HepG2 (cell line): ENCODE measurements at regions of chr5 and their contacts with region 1.

Region 1: GRCh38 chr5:75281716-75282465 is 45.2 kb upstream of the ANKRD31 start:
- DNase-seq: peak; percentile 49
- ATAC-seq: peak; percentile 82
- H3K4me3 ChIP-seq: no peak overlapping the region
- H3K27ac ChIP-seq: no peak overlapping the region
- H3K4me1 ChIP-seq: peaks cover 10% of the 10 kb centered on the region; the same call in 1 of the 2 replicates
- H3K27me3 ChIP-seq: no peaks in the 10 kb centered on the region; a peak in 2 of 5 replicates
- CTCF ChIP-seq: no peak
- EP300 ChIP-seq: no peak
- POLR2A ChIP-seq: no peak
- RAD21 ChIP-seq: no peak

Region 2: GRCh38 chr5:75484605-75485004 is 202.7 kb after region 1 on chr5:
- CTCF ChIA-PET with region 1: no interaction called
- POLR2A ChIA-PET with region 1: no interaction called
- in situ Hi-C with region 1: no loop called
- intact Hi-C with region 1: no loop called
- DNase-seq: no peak
- ATAC-seq: no peak
- H3K4me3 ChIP-seq: no peak overlapping the region
- H3K27ac ChIP-seq: no peak overlapping the region
- H3K4me1 ChIP-seq: no peaks in the 10 kb centered on the region
- H3K27me3 ChIP-seq: no peaks in the 10 kb centered on the region
- CTCF ChIP-seq: no peak
- EP300 ChIP-seq: no peak
- POLR2A ChIP-seq: no peak
- RAD21 ChIP-seq: no peak

Region 3: DNA sequence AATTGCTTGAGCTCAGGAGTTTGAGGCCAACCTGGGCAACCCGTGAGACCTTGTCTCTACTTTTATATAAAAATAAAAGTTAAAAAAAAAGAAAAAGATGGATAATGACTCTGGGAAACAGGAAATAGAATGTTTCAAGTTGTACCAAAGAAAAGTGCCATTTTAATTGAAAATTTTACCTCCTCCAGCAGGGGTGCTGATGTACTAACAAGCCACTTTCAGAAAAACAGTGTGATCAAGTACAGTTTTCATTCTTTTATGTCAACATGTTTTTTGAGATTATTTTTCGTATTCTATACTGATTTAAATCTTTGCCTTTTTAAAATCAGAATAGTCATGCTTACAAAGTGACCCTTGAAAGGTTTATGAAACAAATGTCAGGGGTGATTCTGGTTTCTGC is 1464.8 kb after region 1 on chr5:
- CTCF ChIA-PET with region 1: no interaction called
- POLR2A ChIA-PET with region 1: no interaction called
- in situ Hi-C with region 1: no loop called
- intact Hi-C with region 1: loop called (anchors 5 kb)
- DNase-seq: no peak
- ATAC-seq: no peak
- H3K4me3 ChIP-seq: no peak overlapping the region
- H3K27ac ChIP-seq: no peak overlapping the region
- H3K4me1 ChIP-seq: peaks cover 7% of the 10 kb centered on the region
- H3K27me3 ChIP-seq: peaks cover 1 to 4% of the 10 kb centered on the region in 2 experiments; a peak in 3 of 5 replicates
- CTCF ChIP-seq: no peak
- EP300 ChIP-seq: no peak
- POLR2A ChIP-seq: no peak
- RAD21 ChIP-seq: no peak